A549 (cell line): ENCODE measurements at regions of chr1 and their contacts with region 1.

Region 1: DNA sequence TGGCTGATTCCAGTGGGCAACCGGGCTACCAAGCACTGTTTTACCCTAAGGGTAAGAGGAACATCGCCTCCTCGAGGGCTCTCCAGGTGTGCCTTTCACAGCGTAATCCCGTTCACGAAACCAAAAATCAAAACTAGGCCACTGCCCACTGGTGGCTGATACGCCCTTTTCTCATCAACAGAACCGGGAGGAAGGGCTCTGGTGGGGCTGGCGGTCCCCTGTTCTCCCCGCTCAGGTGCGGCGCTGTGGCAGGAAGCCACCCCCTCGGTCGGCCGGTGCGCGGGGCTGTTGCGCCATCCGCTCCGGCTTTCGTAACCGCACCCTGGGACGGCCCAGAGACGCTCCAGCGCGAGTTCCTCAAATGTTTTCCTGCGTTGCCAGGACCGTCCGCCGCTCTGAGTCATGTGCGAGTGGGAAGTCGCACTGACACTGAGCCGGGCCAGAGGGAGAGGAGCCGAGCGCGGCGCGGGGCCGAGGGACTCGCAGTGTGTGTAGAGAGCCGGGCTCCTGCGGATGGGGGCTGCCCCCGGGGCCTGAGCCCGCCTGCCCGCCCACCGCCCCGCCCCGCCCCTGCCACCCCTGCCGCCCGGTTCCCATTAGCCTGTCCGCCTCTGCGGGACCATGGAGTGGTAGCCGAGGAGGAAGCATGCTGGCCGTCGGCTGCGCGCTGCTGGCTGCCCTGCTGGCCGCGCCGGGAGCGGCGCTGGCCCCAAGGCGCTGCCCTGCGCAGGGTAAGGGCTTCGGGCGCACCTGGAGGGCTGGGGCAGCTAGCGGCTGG is at the start of gene IL6R:
- DNase-seq: peak; percentile 74 to 88
- ATAC-seq: peak; percentile 87 to 88
- H3K4me3 ChIP-seq: peak within 1 kb of the TSS; percentile 78
- H3K27ac ChIP-seq: peak within 1 kb of the TSS; percentile 92 to 95
- H3K4me1 ChIP-seq: peaks cover 31% of the 10 kb centered on the region
- CTCF ChIP-seq: peak; percentile 47
- EP300 ChIP-seq: no peak
- POLR2A ChIP-seq: peak; percentile 46
- RAD21 ChIP-seq: peak; percentile 56 to 73
- polyA plus RNA-seq, gene IL6R: 2.7 and 3.0 TPM in 2 replicates

Region 2: DNA sequence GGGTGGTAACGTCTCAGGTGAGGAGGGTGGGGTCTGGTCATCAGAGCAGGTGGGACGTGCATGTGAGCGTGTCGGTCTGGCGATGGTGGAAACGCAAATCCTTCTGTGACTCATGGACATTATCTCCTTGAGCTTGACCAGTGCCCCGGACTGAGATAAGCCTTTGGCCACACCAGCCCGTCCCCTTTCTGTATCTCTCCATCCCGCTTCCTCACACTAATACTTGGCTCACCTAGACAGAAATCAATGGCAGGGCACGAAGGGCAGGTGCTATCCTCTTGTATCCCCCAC is 92.2 kb before region 1 on chr1:
- CTCF ChIA-PET with region 1: no interaction called
- POLR2A ChIA-PET with region 1: no interaction called
- DNase-seq: no peak
- ATAC-seq: no peak
- H3K4me3 ChIP-seq: no peak overlapping the region
- H3K27ac ChIP-seq: no peak overlapping the region
- H3K4me1 ChIP-seq: no peaks in the 10 kb centered on the region
- CTCF ChIP-seq: no peak
- EP300 ChIP-seq: no peak
- POLR2A ChIP-seq: no peak
- RAD21 ChIP-seq: no peak

Region 3: GRCh38 chr1:154344977-154345837 is 60.0 kb before region 1 on chr1:
- CTCF ChIA-PET with region 1: interaction called, 11 read pairs
- POLR2A ChIA-PET with region 1: no interaction called
- DNase-seq: peak; percentile 41 to 76
- ATAC-seq: peak in 1 of 2 experiments; percentile 78; a peak in 3 of 6 replicates
- H3K4me3 ChIP-seq: no peak overlapping the region
- H3K27ac ChIP-seq: no peak overlapping the region
- H3K4me1 ChIP-seq: no peaks in the 10 kb centered on the region
- CTCF ChIP-seq: peak; percentile 62
- EP300 ChIP-seq: no peak
- POLR2A ChIP-seq: no peak
- RAD21 ChIP-seq: peak; percentile 39 to 66; a peak in 4 of 5 replicates

Region 4: GRCh38 chr1:154371436-154371835 is 33.7 kb before region 1 on chr1:
- CTCF ChIA-PET with region 1: no interaction called
- POLR2A ChIA-PET with region 1: no interaction called
- DNase-seq: no peak
- ATAC-seq: peak in 1 of 2 experiments; percentile 43; a peak in 3 of 6 replicates
- H3K4me3 ChIP-seq: no peak overlapping the region
- H3K27ac ChIP-seq: peak overlapping the region; percentile 53 to 79
- H3K4me1 ChIP-seq: peaks cover 17% of the 10 kb centered on the region
- CTCF ChIP-seq: no peak
- EP300 ChIP-seq: no peak
- POLR2A ChIP-seq: no peak
- RAD21 ChIP-seq: no peak

Region 5: DNA sequence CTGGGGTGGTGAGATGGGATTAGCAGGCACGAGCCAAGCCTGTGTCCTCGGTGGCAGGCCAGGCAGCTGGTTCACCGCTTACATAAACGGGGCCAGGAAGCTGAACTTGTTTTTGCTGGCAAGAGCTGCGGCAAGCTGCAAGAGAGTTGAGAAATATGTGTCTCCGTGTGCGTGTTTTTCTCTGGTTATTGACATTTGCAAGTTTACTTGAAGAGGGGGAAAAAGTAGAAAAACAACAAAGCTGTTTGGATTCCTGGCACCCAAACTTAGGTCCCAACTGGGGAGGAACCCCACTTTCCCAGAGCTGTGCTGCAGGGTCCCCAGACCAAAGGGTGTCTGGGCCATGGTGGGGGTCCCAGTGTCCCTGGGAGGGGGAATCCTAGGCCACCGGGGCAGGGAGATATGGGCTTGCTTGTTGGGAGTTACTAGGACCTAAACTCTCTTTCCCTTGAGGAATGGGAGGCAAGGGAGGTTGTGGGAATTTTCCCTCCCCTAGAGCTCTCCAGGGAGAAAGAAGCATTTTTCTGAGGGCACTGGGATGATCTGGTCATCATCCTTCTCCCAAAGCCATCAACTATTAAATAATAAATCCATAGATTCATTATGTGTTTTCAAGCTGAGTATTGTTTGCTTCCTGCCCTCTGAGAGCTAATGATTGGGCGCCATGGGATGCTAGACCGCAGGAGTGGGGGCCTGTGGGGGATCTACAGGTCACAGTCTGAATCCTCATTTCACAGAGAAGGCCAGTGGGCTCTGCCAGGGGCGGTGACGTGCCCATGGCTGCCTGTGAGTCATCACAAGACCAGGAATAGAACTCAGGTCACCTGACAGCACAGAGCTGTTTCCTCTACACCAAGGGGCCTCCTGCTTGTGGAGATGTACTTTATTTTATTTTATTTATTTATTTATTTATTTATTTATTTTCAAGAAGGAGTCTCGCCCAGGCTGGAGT is 14.7 kb after region 1 on chr1:
- CTCF ChIA-PET with region 1: interaction called, 38 read pairs
- POLR2A ChIA-PET with region 1: interaction called, 10 read pairs
- DNase-seq: peak; percentile 80 to 86
- ATAC-seq: peak; percentile 55 to 64
- H3K4me3 ChIP-seq: peak overlapping the region; percentile 27; the same call in 2 of the 3 replicates
- H3K27ac ChIP-seq: peak overlapping the region; percentile 94 to 96
- H3K4me1 ChIP-seq: peaks cover 75% of the 10 kb centered on the region
- CTCF ChIP-seq: no peak
- EP300 ChIP-seq: peak; percentile 25 to 44; a peak in 2 of 5 replicates
- POLR2A ChIP-seq: no peak
- RAD21 ChIP-seq: no peak